Activated B cell treated with CpG ODN at 0.5 μM for 24 hours (primary cell): ENCODE measurements at regions of chrX and their contacts with region 1.

Region 1: GRCh38 chrX:103585411-103586313 is at the start of gene TCEAL4:
- DNase-seq: peak; percentile 23
- ATAC-seq: peak; percentile 91
- H3K4me3 Mint-ChIP-seq: peak within 1 kb of the TSS; percentile 89
- H3K27ac Mint-ChIP-seq: peak within 1 kb of the TSS; percentile 75
- H3K4me1 Mint-ChIP-seq: peaks cover 11% of the 10 kb centered on the region
- H3K27me3 Mint-ChIP-seq: peaks cover under 1% of the 10 kb centered on the region
- CTCF ChIP-seq: no peak
- total RNA-seq, gene TCEAL4: 18.0 and 20.0 TPM in 2 replicates

Region 2: DNA sequence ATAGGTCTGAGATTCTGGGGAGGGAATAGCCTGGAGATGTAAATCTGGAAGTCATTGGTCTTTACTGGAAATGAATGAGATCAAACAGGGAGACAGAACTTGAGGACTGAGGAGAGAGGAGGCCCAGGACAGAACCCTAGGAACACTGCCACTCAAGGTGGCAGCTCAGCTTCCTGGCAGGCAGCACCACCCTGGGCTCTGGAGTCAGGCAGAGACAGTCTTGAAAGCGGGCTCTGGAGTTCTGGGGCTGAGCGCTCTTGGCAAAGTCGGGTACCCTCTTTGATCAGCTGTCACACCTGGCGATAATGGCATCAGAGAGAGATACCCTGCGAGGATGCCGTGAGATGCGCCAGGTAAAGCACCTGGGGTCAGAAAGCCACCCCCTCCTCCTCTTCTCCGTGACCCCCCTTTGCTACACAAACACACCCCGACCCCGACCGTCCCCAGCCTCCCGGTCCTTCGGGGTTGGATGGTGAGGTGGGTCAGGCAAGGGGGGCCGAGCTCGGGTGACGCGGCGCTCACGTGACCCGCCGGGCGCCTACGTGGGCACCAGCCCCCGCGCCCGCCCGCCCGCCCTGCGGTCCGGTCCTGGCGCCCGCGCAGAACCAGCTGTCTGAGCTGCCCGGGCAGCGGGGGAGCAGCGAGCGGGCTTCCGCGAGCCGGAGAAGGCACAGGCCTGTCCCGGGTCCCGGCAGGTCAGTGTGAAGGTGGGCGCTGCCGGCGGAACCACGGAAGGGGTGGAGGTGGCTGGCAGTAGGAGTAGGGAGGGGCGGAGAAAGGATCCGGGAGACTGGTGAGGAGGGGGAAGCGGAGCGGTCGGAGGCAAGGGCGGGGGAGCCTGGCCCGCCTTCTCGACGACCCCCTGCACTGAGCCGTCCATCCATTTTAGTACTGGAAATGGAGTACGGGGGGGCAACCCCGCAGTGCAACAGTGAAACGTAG is 22.0 kb after region 1 on chrX and contains the start of gene TCEAL3:
- CTCF ChIA-PET with region 1: no interaction called
- POLR2A ChIA-PET with region 1: interaction called, 3 read pairs
- intact Hi-C with region 1: loop called (anchors 2 kb)
- DNase-seq: peak; percentile 51
- ATAC-seq: peak; percentile 83
- H3K4me3 Mint-ChIP-seq: peak within 1 kb of the TSS; percentile 85
- H3K27ac Mint-ChIP-seq: peak within 1 kb of the TSS; percentile 63
- H3K4me1 Mint-ChIP-seq: peaks cover 7% of the 10 kb centered on the region
- H3K27me3 Mint-ChIP-seq: no peaks in the 10 kb centered on the region
- CTCF ChIP-seq: no peak
- total RNA-seq, gene TCEAL3: 7.7 and 8.5 TPM in 2 replicates